Aorta (tissue), 5 donors: ENCODE measurements at regions of chr21 and their contacts with region 1.

Region 1: DNA sequence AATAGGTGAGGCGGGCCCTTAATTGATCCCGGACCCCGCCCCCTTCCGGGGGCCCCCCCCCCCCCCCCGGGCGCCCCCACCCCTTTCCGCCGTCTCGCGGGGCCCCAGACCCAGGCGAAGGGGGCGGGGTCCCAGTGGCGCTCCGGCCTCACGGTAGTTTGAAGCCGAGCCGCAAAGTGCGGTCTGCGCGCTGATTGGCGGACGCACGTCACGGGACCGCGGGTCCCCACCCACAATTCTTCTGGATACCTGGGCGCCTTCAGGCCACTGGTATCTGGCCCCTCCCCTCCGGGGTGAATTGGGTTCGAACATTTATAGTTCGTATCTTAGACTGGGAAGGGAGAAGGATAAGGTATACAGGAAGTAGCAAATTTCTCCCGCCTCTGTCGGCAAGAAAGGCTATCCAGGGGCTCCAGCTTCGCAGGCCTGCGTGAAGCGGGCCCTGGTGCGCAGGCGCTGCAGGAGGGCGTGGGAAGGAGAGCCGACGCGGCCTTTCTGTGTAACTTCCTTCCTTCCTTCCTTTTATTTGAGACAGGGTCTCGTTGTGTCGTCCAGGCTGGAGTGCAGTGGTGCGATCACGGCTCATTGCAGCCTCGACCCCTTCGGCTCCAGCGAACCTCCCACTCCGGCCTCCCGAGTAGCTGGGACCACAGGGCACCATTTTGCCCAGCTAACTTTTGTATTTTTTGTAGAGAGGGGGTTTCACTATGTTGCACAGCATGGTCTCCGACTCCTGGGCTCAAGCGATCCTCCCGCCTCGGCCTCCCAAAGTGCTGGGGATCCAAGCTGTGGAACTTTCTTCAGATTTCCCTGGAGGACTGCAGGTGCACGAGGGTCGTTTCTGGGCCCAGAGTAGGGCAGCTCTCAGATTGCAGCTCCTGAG is 564 bp upstream of the HMGN1 start:
- DNase-seq: peak; percentile 98
- ATAC-seq: peak; percentile 98
- H3K4me3 ChIP-seq: peak overlapping the region; percentile 92 to 99
- H3K27ac ChIP-seq: peak overlapping the region in 1 of 2 donors; percentile 22
- H3K4me1 ChIP-seq: peaks cover 0 to 4% of the 10 kb centered on the region in 2 donors
- H3K27me3 ChIP-seq: no peaks in the 10 kb centered on the region

Region 2: DNA sequence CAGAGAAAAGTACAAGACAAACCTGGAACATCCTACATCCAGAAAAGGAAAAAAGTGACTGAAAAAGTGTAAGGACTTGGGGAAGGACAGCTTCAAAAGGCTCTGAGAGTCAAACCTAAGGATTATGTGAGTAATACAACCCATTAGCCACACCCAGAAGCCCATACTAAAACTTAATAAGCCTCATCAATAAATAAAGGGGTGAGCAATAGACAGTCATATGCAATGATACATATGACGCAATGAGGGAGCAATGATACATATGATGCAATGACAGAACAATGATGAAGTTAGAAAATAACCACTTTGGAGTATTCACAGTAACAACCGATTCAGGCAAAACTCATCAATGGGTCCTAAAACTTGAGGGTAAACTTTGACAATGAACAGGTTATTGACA is 86.1 kb before region 1 on chr21:
- intact Hi-C with region 1: no loop called
- DNase-seq: no peak
- ATAC-seq: no peak
- H3K4me3 ChIP-seq: no peak overlapping the region
- H3K27ac ChIP-seq: no peak overlapping the region
- H3K4me1 ChIP-seq: no peaks in the 10 kb centered on the region
- H3K27me3 ChIP-seq: no peaks in the 10 kb centered on the region

Region 3: GRCh38 chr21:39313571-39314142 is 35.8 kb before region 1 on chr21 and contains the start of gene BRWD1:
- intact Hi-C with region 1: loop called (anchors 2 kb)
- DNase-seq: peak; percentile 88 to 95
- ATAC-seq: peak; percentile 93
- H3K4me3 ChIP-seq: peak within 1 kb of the TSS; percentile 94 to 98
- H3K27ac ChIP-seq: peak within 1 kb of the TSS; percentile 34 to 61
- H3K4me1 ChIP-seq: no peaks in the 10 kb centered on the region
- H3K27me3 ChIP-seq: no peaks in the 10 kb centered on the region
- total RNA-seq, gene BRWD1: 41.8 to 68.5 TPM

Region 4: GRCh38 chr21:39379986-39380891 is 30.8 kb after region 1 on chr21:
- intact Hi-C with region 1: loop called (anchors 2 to 5 kb)
- DNase-seq: peak; percentile 98 to 99
- ATAC-seq: peak; percentile 98
- H3K4me3 ChIP-seq: peak overlapping the region; percentile 51 to 99
- H3K27ac ChIP-seq: peak overlapping the region in 1 of 2 donors; percentile 99
- H3K4me1 ChIP-seq: no peaks in the 10 kb centered on the region
- H3K27me3 ChIP-seq: no peaks in the 10 kb centered on the region

Region 5: GRCh38 chr21:39776589-39776988 is 427.1 kb after region 1 on chr21:
- intact Hi-C with region 1: no loop called
- DNase-seq: no peak
- ATAC-seq: no peak
- H3K4me3 ChIP-seq: no peak overlapping the region
- H3K27ac ChIP-seq: no peak overlapping the region
- H3K4me1 ChIP-seq: no peaks in the 10 kb centered on the region
- H3K27me3 ChIP-seq: no peaks in the 10 kb centered on the region